Activated T-helper 1 cell treated with anti-CD3 and anti-CD28 coated beads, Interleukin-12 subunit alpha, Interleukin-12 subunit beta, Interleukin-2, Interleukin-4 antibody, amounts not matched to agents 30 ng/mL and 10 ng/mL and 1 ng/mL, durations not matched to agents 14 hours and 24 hours and 36 hours (primary cell): ENCODE measurements at regions of chr15 and their contacts with region 1.

Region 1: GRCh38 chr15:60585743-60586708 is 107.1 kb upstream of the ICE2 start:
- DNase-seq: peak; percentile 51
- H3K4me3 Mint-ChIP-seq: peak overlapping the region; percentile 74
- H3K27ac Mint-ChIP-seq: peak overlapping the region; percentile 92
- H3K4me1 Mint-ChIP-seq: peaks cover 91% of the 10 kb centered on the region
- H3K27me3 Mint-ChIP-seq: no peaks in the 10 kb centered on the region

Region 2: DNA sequence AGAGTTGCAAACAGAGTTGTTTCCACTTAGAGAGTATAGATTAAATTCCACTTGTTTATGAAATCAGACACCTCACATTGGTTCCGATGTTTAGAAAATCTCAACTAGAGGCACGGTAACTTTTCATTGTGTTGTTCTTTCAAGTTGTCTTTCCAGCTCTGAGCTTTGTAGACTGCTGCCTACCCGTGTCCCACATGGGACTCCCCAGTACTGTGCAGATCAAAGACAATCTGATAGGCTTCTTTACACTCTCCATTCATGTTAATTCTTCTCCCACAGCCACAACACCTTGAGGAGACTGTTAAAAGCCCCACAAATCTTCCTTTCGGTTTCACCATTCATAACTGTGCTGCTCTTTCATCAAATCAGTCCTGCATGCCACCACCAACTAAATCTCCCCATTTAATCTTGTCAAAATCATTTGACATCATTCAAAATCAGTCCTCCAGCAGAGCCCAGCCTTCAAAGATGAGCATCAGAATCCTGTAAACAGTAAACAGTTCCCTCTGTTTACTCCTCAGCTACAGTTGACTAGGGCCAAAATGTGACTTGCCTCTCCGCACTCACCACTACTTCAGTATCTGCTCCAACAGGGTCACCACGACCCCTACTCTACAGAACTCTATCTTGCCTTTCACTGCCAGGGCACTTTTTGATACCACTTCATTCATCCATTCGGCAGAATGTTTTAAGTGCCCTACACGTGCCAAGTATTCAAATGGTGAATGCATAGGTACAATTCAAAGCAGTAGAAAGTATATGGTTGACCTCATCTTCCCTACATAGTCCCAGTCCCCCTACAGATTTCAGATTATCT is 196.6 kb before region 1 on chr15:
- intact Hi-C with region 1: loop called (anchors 2 kb)
- DNase-seq: peak; percentile 60
- H3K4me3 Mint-ChIP-seq: peak overlapping the region; percentile 34
- H3K27ac Mint-ChIP-seq: peak overlapping the region; percentile 81
- H3K4me1 Mint-ChIP-seq: peaks cover 73% of the 10 kb centered on the region
- H3K27me3 Mint-ChIP-seq: no peaks in the 10 kb centered on the region

Region 3: DNA sequence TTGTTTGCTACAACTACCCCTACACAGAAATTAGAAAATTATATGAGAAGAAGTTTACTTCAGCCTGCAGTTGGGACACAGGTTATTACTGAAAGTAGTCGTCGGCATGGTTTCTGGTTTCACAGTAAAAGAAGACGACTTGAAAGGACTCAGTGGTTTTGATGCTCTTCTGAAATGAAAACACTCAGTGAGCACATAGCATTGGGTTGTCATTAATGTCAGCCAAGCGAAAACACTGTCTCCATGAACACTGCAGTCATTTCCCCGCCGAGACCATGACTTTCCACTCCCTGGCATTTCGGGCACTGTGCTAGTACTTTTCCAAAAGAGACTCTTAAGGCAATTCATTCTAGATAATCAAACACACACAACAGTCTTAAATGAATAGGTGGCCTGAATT is 37.9 kb before region 1 on chr15:
- intact Hi-C with region 1: loop called (anchors 1 kb)
- DNase-seq: peak; percentile 54
- H3K4me3 Mint-ChIP-seq: peak overlapping the region; percentile 51
- H3K27ac Mint-ChIP-seq: peak overlapping the region; percentile 93
- H3K4me1 Mint-ChIP-seq: peaks cover 96% of the 10 kb centered on the region
- H3K27me3 Mint-ChIP-seq: no peaks in the 10 kb centered on the region

Region 4: GRCh38 chr15:60605879-60606304 is 19.9 kb after region 1 on chr15:
- intact Hi-C with region 1: no loop called
- DNase-seq: no peak
- H3K4me3 Mint-ChIP-seq: no peak overlapping the region
- H3K27ac Mint-ChIP-seq: no peak overlapping the region
- H3K4me1 Mint-ChIP-seq: peaks cover 30% of the 10 kb centered on the region
- H3K27me3 Mint-ChIP-seq: peaks cover 27% of the 10 kb centered on the region

Region 5: GRCh38 chr15:60649845-60650548 is 64.0 kb after region 1 on chr15:
- intact Hi-C with region 1: loop called (anchors 1 kb)
- DNase-seq: peak; percentile 46
- H3K4me3 Mint-ChIP-seq: peak overlapping the region; percentile 70
- H3K27ac Mint-ChIP-seq: peak overlapping the region; percentile 89
- H3K4me1 Mint-ChIP-seq: peaks cover 69% of the 10 kb centered on the region
- H3K27me3 Mint-ChIP-seq: peaks cover under 1% of the 10 kb centered on the region

Region 6: GRCh38 chr15:60840306-60840702 is 254.3 kb after region 1 on chr15:
- intact Hi-C with region 1: loop called (anchors 2 kb)
- DNase-seq: no peak
- H3K4me3 Mint-ChIP-seq: peak overlapping the region; percentile 49
- H3K27ac Mint-ChIP-seq: peak overlapping the region; percentile 37
- H3K4me1 Mint-ChIP-seq: peaks cover 66% of the 10 kb centered on the region
- H3K27me3 Mint-ChIP-seq: peaks cover 17% of the 10 kb centered on the region

Region 7: DNA sequence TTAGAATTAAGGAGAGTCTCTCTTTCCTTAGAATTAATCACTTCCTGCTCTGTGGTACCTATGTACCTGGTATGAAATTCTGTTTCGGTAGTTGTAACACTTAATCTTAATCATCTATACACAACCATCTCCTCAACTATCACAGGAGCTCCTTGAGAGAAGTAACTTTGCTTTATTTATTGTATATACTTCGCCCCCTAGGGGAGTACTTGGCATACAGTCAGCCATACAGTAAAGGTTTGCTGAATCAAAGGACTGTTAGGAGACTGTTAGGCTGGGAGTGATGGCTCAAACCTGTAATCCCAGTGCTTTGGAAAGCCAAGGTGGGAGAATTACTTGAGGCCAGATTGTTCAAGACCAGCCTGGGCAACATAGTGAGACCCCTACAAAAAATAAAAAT is 598.4 kb after region 1 on chr15:
- intact Hi-C with region 1: loop called (anchors 5 kb)
- DNase-seq: no peak
- H3K4me3 Mint-ChIP-seq: no peak overlapping the region
- H3K27ac Mint-ChIP-seq: no peak overlapping the region
- H3K4me1 Mint-ChIP-seq: no peaks in the 10 kb centered on the region
- H3K27me3 Mint-ChIP-seq: peaks cover 46% of the 10 kb centered on the region